IMR-90 (cell line): ENCODE measurements at regions of chr5 and their contacts with region 1.

Region 1: DNA sequence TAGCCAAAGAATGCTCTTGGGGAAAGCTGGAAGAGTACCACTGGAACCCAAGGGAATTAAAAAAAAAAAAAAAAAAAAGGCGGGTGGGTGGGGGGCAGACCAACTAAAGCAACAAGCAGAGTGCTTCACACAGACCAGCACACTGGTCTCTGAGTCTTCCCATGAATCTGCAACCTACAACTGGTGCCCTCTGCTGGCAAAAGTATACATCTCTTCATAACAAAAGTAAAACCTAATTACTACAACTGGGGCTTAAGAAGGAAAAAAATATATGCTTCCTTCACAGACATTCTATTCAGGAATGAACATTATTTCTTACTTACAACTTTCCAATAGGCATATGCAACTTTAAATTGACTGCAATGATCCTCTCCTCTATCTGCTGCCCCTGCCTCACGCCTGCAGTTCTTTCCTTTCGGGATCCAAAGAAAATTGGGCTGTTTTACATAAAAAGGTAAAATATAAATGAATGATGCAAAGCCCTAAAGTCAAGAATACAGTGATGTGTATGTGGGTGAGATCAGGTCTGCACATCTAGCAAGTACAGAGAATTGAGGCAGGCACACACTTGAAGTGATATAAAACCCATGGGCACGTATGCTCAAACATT is 7.2 kb upstream of the KLHL3 start:
- DNase-seq: peak; percentile 77
- ATAC-seq: peak; percentile 90
- H3K4me3 ChIP-seq: no peak overlapping the region
- H3K27ac ChIP-seq: no peak overlapping the region
- H3K4me1 ChIP-seq: no peaks in the 10 kb centered on the region
- H3K27me3 ChIP-seq: no peaks in the 10 kb centered on the region; the same call in none of the 2 replicates
- CTCF ChIP-seq: peak; percentile 74
- POLR2A ChIP-seq: no peak
- RAD21 ChIP-seq: peak; percentile 78

Region 2: GRCh38 chr5:137320056-137321045 is 422.8 kb before region 1 on chr5:
- CTCF ChIA-PET with region 1: no interaction called
- POLR2A ChIA-PET with region 1: no interaction called
- dilution Hi-C with region 1: no loop called
- in situ Hi-C with region 1: loop called (anchors 25 kb)
- intact Hi-C with region 1: loop called (anchors 10 kb)
- DNase-seq: peak; percentile 51
- ATAC-seq: peak; percentile 73; the same call in 1 of the 2 replicates
- H3K4me3 ChIP-seq: no peak overlapping the region
- H3K27ac ChIP-seq: no peak overlapping the region
- H3K4me1 ChIP-seq: no peaks in the 10 kb centered on the region
- H3K27me3 ChIP-seq: peaks cover 8% of the 10 kb centered on the region
- CTCF ChIP-seq: peak; percentile 82
- POLR2A ChIP-seq: no peak
- RAD21 ChIP-seq: peak; percentile 76

Region 3: DNA sequence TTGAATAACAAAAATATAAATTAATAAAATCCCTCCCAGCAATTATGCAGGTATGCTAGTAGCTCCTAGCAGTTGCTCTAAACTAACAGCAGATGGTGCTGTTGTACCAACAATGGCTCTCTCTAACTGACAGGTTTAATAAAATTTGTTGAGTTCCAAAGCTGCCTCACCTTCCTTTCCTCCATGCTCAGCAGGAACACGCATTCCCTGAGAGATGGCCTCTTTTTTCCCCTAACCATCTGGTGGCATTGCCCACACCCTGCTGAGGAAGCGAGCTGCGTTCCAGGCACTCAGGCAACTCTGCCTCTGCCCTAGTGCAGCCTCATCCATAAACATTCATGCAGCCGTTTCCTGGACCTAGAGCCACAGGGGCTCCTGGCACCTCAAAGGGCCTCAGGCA is 113.5 kb before region 1 on chr5:
- CTCF ChIA-PET with region 1: interaction called, 30 read pairs
- POLR2A ChIA-PET with region 1: no interaction called
- dilution Hi-C with region 1: no loop called
- in situ Hi-C with region 1: loop called (anchors 5 kb)
- intact Hi-C with region 1: loop called (anchors 1 kb)
- DNase-seq: peak; percentile 63
- ATAC-seq: peak; percentile 91
- H3K4me3 ChIP-seq: no peak overlapping the region
- H3K27ac ChIP-seq: no peak overlapping the region
- H3K4me1 ChIP-seq: no peaks in the 10 kb centered on the region; the same call in 1 of the 2 replicates
- H3K27me3 ChIP-seq: no peaks in the 10 kb centered on the region
- CTCF ChIP-seq: peak; percentile 95
- POLR2A ChIP-seq: no peak; the same call in 1 of the 2 replicates
- RAD21 ChIP-seq: peak; percentile 96

Region 4: DNA sequence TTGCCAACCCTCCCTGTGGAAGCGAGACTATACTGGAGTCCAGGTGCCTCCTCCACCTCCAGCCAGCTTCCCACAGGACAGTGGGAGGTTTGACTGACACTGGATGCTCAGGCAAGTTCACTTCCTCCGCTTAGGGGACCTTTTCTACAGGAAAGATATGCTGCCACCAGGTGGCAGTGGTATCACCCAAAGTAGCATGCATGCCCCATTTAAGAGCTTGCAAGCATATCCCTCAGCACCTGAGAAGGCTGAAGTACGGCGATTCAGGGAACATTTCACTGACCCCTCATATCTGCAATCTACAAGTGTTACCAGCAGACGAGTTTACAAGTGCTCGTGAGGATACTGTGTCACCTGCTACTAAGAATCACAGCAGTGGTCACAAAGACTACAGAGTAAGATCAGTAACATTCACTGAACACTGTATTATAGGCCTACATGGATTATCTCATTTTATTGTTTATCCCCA is 82.8 kb before region 1 on chr5:
- CTCF ChIA-PET with region 1: interaction called, 25 read pairs
- POLR2A ChIA-PET with region 1: no interaction called
- dilution Hi-C with region 1: no loop called
- in situ Hi-C with region 1: loop called (anchors 5 kb)
- intact Hi-C with region 1: loop called (anchors 1 kb)
- DNase-seq: peak; percentile 81
- ATAC-seq: peak; percentile 93
- H3K4me3 ChIP-seq: no peak overlapping the region
- H3K27ac ChIP-seq: no peak overlapping the region
- H3K4me1 ChIP-seq: no peaks in the 10 kb centered on the region
- H3K27me3 ChIP-seq: no peaks in the 10 kb centered on the region
- CTCF ChIP-seq: peak; percentile 75
- POLR2A ChIP-seq: no peak
- RAD21 ChIP-seq: peak; percentile 80

Region 5: GRCh38 chr5:137668574-137669093 is 74.5 kb before region 1 on chr5:
- CTCF ChIA-PET with region 1: interaction called, 10 read pairs
- POLR2A ChIA-PET with region 1: no interaction called
- dilution Hi-C with region 1: no loop called
- in situ Hi-C with region 1: no loop called
- intact Hi-C with region 1: no loop called
- DNase-seq: no peak
- ATAC-seq: no peak
- H3K4me3 ChIP-seq: no peak overlapping the region
- H3K27ac ChIP-seq: no peak overlapping the region
- H3K4me1 ChIP-seq: no peaks in the 10 kb centered on the region; the same call in 1 of the 2 replicates
- H3K27me3 ChIP-seq: no peaks in the 10 kb centered on the region
- CTCF ChIP-seq: no peak
- POLR2A ChIP-seq: no peak
- RAD21 ChIP-seq: no peak

Region 6: GRCh38 chr5:137754126-137754960 is 11.2 kb after region 1 on chr5 and contains the start of gene HNRNPA0:
- CTCF ChIA-PET with region 1: interaction called, 22 read pairs
- POLR2A ChIA-PET with region 1: interaction called, 3 read pairs
- dilution Hi-C with region 1: no loop called
- in situ Hi-C with region 1: no loop called
- intact Hi-C with region 1: no loop called
- DNase-seq: peak; percentile 97
- ATAC-seq: peak; percentile 96
- H3K4me3 ChIP-seq: peak within 1 kb of the TSS; percentile 61
- H3K27ac ChIP-seq: peak within 1 kb of the TSS; percentile 92
- H3K4me1 ChIP-seq: no peaks in the 10 kb centered on the region; the same call in 1 of the 2 replicates
- H3K27me3 ChIP-seq: no peaks in the 10 kb centered on the region
- CTCF ChIP-seq: 0 out of 2 replicates have a peak, but pooled peaks have one; percentile 1
- POLR2A ChIP-seq: peak; percentile 98
- RAD21 ChIP-seq: no peak
- total RNA-seq, gene HNRNPA0: 5.2 and 8.9 TPM in 2 replicates

Region 7: DNA sequence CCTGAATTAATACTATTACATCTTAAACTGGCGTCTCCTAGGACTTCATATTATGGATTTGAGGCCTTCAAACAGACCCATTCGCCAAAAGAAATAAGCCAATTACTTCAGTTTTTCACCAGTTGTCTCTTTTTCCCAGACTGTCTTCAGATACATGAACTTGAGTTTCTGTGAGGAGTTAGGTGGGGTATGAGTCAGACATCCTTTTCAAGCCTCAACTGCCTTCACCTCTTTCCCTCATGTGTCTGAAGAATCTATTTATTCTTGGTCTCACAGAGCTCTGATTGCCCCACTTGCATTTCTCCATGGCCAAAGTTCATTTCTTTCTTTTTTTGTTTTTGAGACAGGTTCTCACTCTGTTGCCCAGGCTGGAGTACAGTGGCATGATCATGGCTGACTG is 353.2 kb after region 1 on chr5:
- CTCF ChIA-PET with region 1: no interaction called
- POLR2A ChIA-PET with region 1: no interaction called
- dilution Hi-C with region 1: no loop called
- in situ Hi-C with region 1: no loop called
- intact Hi-C with region 1: no loop called
- DNase-seq: no peak
- ATAC-seq: no peak
- H3K4me3 ChIP-seq: no peak overlapping the region
- H3K27ac ChIP-seq: no peak overlapping the region
- H3K4me1 ChIP-seq: no peaks in the 10 kb centered on the region
- H3K27me3 ChIP-seq: peaks cover 29% of the 10 kb centered on the region
- CTCF ChIP-seq: no peak
- POLR2A ChIP-seq: no peak
- RAD21 ChIP-seq: no peak